CD8-positive, alpha-beta memory T cell (primary cell): ENCODE measurements at regions of chr9 and their contacts with region 1.

Region 1: DNA sequence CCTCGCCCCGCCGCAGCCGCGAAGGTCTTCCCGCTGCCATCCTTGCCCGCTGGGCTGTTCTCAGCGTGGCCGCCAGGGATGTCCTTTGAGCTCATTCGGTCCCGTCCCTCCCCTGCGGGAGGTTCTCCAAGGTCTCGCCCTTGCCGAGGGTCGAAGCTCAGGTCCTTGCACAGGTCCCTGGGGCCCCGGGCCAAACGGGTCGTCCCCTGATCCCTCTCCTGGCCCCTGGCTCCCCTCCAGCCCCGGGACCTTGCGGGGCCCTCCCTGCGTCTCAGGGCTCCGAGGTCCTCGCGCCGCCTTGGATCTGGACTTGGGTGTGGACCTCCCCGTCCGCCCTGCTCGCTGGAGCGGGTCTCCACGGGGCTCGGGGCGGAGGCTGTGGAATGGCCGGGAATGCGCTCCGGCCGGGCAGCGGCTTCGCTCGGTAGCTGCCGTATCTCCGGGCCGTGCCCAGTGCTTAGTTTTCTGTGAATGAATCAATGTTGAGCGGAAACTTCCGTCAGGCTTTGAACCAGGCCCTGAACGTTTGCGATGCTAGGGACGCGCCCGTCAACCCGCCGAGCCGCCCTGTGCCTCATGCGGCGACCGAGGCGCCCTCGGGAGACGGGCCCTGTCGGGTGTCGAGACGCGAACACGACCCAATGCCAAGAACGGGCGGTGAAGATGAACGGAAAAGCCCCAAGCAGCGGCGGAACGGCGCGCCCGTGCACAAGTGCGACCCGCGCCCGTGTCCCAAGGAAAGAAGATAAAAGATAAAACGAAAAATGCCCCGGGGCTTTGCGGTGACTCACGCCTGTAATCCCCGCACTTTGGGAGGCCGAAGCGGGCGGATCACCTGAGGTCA is 789 bp downstream of the RNU6ATAC start:
- DNase-seq: peak; percentile 54 to 79 (median 70)
- H3K4me3 ChIP-seq: no peak overlapping the region
- H3K4me3 Mint-ChIP-seq: no peak overlapping the region
- H3K27ac ChIP-seq: no peak overlapping the region
- H3K27ac Mint-ChIP-seq: peak overlapping the region in 2 of 8 donors; percentile 55 to 58
- H3K4me1 ChIP-seq: peaks cover 10% of the 10 kb centered on the region
- H3K4me1 Mint-ChIP-seq: peaks cover 7 to 28% (median 15%) of the 10 kb centered on the region in 3 donors
- H3K27me3 ChIP-seq: no peaks in the 10 kb centered on the region
- H3K27me3 Mint-ChIP-seq: no peaks in the 10 kb centered on the region

Region 2: GRCh38 chr9:134135343-134136118 is 28.0 kb before region 1 on chr9 and contains the start of gene WDR5:
- CTCF ChIA-PET with region 1: interaction called, 13 read pairs
- POLR2A ChIA-PET with region 1: interaction called, 41 read pairs
- DNase-seq: peak; percentile 87 to 93 (median 88)
- H3K4me3 ChIP-seq: peak within 1 kb of the TSS; percentile 96
- H3K4me3 Mint-ChIP-seq: peak within 1 kb of the TSS; percentile 85 to 97 (median 93)
- H3K27ac ChIP-seq: peak within 1 kb of the TSS; percentile 86
- H3K27ac Mint-ChIP-seq: peak within 1 kb of the TSS; percentile 79 to 95 (median 88)
- H3K4me1 ChIP-seq: peaks cover 32% of the 10 kb centered on the region
- H3K4me1 Mint-ChIP-seq: peaks cover 29 to 53% (median 48%) of the 10 kb centered on the region in 3 donors
- H3K27me3 ChIP-seq: no peaks in the 10 kb centered on the region
- H3K27me3 Mint-ChIP-seq: peaks cover 0 to 3% of the 10 kb centered on the region in 2 donors
- total RNA-seq, gene WDR5: 62.2 to 64.3 TPM

Region 3: GRCh38 chr9:134455934-134456739 is 292.6 kb after region 1 on chr9:
- CTCF ChIA-PET with region 1: interaction called, 4 read pairs
- POLR2A ChIA-PET with region 1: interaction called, 12 read pairs
- DNase-seq: peak; percentile 57 to 85 (median 80)
- H3K4me3 ChIP-seq: peak overlapping the region; percentile 67
- H3K4me3 Mint-ChIP-seq: peak overlapping the region; percentile 66 to 94 (median 85)
- H3K27ac ChIP-seq: peak overlapping the region; percentile 49
- H3K27ac Mint-ChIP-seq: peak overlapping the region; percentile 71 to 98 (median 96)
- H3K4me1 ChIP-seq: peaks cover 20% of the 10 kb centered on the region
- H3K4me1 Mint-ChIP-seq: peaks cover 7 to 12% (median 8%) of the 10 kb centered on the region in 3 donors
- H3K27me3 ChIP-seq: no peaks in the 10 kb centered on the region
- H3K27me3 Mint-ChIP-seq: no peaks in the 10 kb centered on the region